Activated T-helper 1 cell treated with anti-CD3 and anti-CD28 coated beads, Interleukin-12 subunit alpha, Interleukin-12 subunit beta, Interleukin-2, Interleukin-4 antibody, amounts not matched to agents 30 ng/mL and 10 ng/mL and 1 ng/mL, durations not matched to agents 14 hours and 24 hours and 36 hours (primary cell): ENCODE measurements at regions of chr3 and their contacts with region 1.

Region 1: GRCh38 chr3:132722164-132723024 is at the start of gene NPHP3:
- DNase-seq: peak; percentile 85
- H3K4me3 Mint-ChIP-seq: peak within 1 kb of the TSS; percentile 95
- H3K27ac Mint-ChIP-seq: peak within 1 kb of the TSS; percentile 91
- H3K4me1 Mint-ChIP-seq: peaks cover 36% of the 10 kb centered on the region
- H3K27me3 Mint-ChIP-seq: peaks cover 4% of the 10 kb centered on the region
- total RNA-seq, gene NPHP3: 14.4 and 17.0 TPM in 2 replicates

Region 2: DNA sequence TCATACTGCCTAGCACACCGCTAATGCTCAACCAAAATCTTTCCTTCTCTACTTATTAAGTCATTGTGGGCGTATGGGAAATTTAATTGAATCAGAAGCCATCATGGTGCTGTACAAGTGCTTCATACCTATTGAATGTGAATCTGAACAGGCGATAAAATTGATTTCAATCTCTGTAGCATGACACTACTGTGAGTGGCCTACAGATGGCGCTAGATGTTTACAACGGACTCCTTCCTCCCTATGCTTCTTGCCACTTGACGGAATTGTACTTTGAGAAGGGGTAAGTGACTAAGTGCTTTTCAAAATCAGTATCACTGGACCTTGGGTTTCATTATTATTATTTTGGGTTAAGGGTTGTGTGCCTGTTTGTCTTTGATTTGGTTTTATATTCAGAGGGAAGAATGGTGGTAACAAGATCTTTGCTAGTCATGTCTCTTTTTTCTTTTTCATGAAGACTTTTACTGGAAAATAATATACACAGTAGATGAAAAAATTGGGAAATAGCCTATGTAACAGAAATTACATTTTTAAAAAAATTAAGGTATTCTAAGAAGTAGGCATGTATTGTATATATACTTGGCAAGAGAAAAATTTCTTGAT is 369.8 kb before region 1 on chr3:
- intact Hi-C with region 1: loop called (anchors 5 kb)
- DNase-seq: peak; percentile 43
- H3K4me3 Mint-ChIP-seq: no peak overlapping the region
- H3K27ac Mint-ChIP-seq: no peak overlapping the region
- H3K4me1 Mint-ChIP-seq: peaks cover 5% of the 10 kb centered on the region
- H3K27me3 Mint-ChIP-seq: no peaks in the 10 kb centered on the region

Region 3: DNA sequence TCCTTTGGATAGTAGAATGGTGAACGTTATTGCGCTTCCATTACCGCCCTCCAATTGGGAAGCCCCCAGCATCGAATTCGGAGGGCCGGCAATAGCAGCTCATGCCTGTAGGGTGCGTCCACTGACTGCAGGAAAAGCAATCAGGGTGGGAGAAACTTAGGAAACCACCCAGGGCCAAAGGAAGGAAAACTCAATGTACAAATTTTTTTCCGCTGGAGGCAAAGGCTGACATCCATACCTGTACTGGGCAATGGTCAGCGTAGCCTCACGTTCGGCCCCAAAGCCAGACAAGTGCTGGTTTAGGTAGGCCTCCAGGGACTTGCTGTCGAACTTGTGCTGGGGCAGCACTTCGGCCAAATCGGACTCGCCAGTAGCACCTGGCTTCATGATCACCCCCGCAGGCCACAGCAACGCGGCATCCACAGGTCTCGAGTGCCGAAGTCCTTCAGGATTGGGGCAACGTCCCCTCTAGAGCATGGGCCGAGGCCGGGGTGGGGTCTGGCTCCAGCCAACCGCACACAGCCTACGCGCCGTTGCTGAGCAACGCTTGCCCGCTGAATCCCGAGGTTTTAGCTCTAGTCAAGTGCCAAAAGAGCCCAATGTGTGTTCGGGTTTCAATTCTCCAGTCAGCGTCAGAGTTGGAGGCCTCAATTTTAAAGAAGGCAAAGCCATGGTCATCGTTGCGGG is 62.9 kb before region 1 on chr3 and contains the start of gene ACAD11:
- intact Hi-C with region 1: loop called (anchors 1 kb)
- DNase-seq: peak; percentile 24
- H3K4me3 Mint-ChIP-seq: peak within 1 kb of the TSS; percentile 97
- H3K27ac Mint-ChIP-seq: peak within 1 kb of the TSS; percentile 98
- H3K4me1 Mint-ChIP-seq: peaks cover 44% of the 10 kb centered on the region
- H3K27me3 Mint-ChIP-seq: no peaks in the 10 kb centered on the region
- total RNA-seq, gene ACAD11: 14.1 and 14.3 TPM in 2 replicates

Region 4: DNA sequence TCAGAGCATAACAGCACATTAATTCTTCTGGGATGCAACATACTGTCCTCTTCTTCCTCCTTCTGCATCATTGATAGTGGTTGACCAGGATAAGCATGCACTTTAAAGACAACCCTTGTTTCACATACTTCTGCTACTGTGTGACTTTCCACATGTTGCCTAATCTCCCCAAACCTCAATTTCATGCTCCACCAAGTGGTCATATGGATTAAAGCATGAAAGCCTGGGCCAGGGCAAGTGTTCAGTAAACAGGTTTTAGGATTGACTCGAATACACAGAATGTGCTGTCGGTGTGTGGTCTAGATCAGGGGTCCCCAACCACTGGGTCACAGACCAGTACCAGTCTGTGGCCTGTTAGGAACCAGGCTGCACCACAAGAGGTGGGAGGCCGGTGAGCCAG is 655.0 kb after region 1 on chr3:
- intact Hi-C with region 1: loop called (anchors 1 kb)
- DNase-seq: no peak
- H3K4me3 Mint-ChIP-seq: no peak overlapping the region
- H3K27ac Mint-ChIP-seq: no peak overlapping the region
- H3K4me1 Mint-ChIP-seq: no peaks in the 10 kb centered on the region
- H3K27me3 Mint-ChIP-seq: no peaks in the 10 kb centered on the region

Region 5: DNA sequence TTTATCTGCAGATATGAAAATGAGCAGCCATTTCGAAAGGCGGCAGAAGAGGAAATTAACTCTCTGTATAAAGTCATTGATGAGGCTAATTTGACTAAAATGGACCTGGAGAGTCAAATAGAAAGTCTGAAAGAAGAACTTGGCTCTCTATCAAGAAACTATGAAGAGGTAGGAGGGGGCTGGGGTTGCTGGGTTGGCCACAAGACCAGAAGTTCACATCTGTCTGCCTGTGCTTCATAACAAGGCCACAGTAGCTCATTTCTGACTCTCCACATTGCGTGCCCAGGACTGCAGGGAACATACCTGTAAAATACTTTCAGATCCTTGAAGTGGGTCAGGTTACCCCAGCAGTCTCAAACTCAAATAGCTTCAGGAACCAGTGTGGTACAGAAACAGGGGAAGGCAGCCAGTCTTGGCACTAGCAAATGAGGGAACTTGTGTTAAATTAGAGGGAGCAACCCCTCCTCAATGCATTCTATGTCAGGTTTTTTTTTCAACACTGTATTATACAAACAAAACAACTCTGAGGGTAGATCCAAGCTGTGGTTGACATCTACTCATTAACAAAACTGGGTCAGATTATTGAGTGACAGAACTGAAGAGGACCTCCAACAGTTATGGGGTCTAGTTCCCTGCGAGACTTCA is 726.2 kb after region 1 on chr3:
- intact Hi-C with region 1: loop called (anchors 5 kb)
- DNase-seq: peak; percentile 22
- H3K4me3 Mint-ChIP-seq: peak overlapping the region; percentile 34
- H3K27ac Mint-ChIP-seq: peak overlapping the region; percentile 80
- H3K4me1 Mint-ChIP-seq: peaks cover 34% of the 10 kb centered on the region
- H3K27me3 Mint-ChIP-seq: peaks cover 2% of the 10 kb centered on the region

Region 6: DNA sequence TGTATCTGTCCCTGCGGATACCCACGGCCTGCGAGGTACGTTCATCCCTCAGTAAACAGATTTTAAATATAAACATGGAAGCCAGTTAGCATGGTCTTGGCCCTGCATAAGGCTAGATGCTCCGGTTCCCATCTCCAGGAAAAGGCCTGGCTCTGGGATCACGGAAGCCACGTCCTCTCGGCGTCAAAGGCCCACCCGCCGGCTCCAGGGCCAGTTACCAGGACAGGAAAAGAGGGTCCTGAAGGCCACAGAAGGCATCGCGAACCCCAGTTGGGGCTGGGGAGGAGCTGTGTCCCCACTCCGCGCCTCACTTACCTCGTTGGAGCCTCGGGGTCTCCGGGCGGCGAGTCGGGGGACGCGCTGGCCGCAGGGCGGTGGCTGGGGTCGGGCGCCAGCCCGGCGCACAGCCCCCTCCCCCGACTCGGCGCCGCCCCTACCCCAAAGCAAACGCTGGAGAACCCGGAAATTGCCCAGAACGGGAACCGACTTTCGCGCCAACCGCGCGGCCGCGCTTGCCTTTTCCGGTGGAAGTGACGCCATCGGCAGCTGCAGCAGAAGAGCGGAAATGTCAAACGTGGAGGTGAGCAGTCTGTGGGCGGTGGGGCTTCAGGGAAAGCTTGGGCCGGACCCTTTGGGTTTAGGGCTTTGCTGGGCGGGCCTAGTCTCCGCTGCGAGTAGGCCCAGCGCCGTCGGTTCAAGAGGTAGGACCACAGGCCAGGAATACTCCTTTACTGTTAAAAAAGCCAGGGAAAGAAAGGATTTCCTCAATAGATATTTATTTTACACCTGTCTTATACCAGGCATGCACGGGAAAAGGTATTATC is 939.3 kb after region 1 on chr3 and contains the start of gene TOPBP1:
- intact Hi-C with region 1: loop called (anchors 1 kb)
- DNase-seq: peak; percentile 90
- H3K4me3 Mint-ChIP-seq: peak within 1 kb of the TSS; percentile 99
- H3K27ac Mint-ChIP-seq: peak within 1 kb of the TSS; percentile 99
- H3K4me1 Mint-ChIP-seq: peaks cover 47% of the 10 kb centered on the region
- H3K27me3 Mint-ChIP-seq: peaks cover 2% of the 10 kb centered on the region
- total RNA-seq, gene TOPBP1: 88.5 and 94.1 TPM in 2 replicates

Region 7: GRCh38 chr3:134212906-134213665 is 1490.7 kb after region 1 on chr3:
- intact Hi-C with region 1: loop called (anchors 10 kb)
- DNase-seq: peak; percentile 61
- H3K4me3 Mint-ChIP-seq: no peak overlapping the region
- H3K27ac Mint-ChIP-seq: no peak overlapping the region
- H3K4me1 Mint-ChIP-seq: peaks cover 18% of the 10 kb centered on the region
- H3K27me3 Mint-ChIP-seq: peaks cover 6% of the 10 kb centered on the region